WTC11 (cell line): ENCODE measurements at regions of chr6 and their contacts with region 1.

Region 1: DNA sequence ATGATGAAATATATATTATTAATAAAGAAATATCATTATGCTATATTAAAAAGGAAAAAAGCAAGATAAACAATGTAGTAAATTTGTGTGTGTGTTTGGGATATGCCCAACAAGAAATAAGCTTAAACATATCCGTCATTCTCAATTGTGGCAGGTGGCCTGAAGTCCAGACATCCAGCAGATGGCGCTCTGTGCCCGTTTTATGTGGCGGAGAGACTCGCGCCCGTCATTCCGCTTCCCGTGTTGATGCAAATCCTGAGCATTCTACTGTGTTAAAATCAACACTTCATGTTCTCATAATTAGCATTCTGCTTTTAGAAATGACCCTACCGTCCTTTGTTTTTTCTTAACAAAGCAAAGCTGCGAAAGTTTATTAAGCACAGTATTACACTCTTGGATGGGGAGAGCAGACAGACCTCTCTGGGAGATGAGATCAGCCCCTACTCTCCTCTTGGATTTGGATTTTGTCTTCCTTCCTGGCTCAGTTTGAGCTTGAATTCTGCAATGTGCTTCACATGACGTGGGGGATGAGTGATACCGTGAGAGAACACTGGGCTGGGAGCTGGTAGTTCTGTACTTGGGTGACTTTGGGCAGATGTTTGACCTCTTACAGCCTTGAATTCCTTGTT is 125.8 kb downstream of the MCHR2 start:
- DNase-seq: peak; percentile 87
- ATAC-seq: peak; percentile 84
- H3K4me3 Mint-ChIP-seq: peak overlapping the region; percentile 50
- H3K27ac Mint-ChIP-seq: no peak overlapping the region
- H3K4me1 Mint-ChIP-seq: peaks cover 7% of the 10 kb centered on the region; the same call in 1 of the 2 replicates
- H3K27me3 Mint-ChIP-seq: peaks cover 14% of the 10 kb centered on the region
- CTCF ChIP-seq: peak; percentile 79

Region 2: GRCh38 chr6:99645986-99646385 is 222.2 kb before region 1 on chr6:
- CTCF ChIA-PET with region 1: no interaction called
- POLR2A ChIA-PET with region 1: no interaction called
- DNase-seq: no peak
- ATAC-seq: no peak
- H3K4me3 Mint-ChIP-seq: no peak overlapping the region
- H3K27ac Mint-ChIP-seq: no peak overlapping the region
- H3K4me1 Mint-ChIP-seq: no peaks in the 10 kb centered on the region
- H3K27me3 Mint-ChIP-seq: peaks cover 8% of the 10 kb centered on the region
- CTCF ChIP-seq: no peak

Region 3: GRCh38 chr6:99846006-99846405 is 22.2 kb before region 1 on chr6:
- CTCF ChIA-PET with region 1: interaction called, 12 read pairs
- POLR2A ChIA-PET with region 1: no interaction called
- DNase-seq: no peak
- ATAC-seq: peak; percentile 81
- H3K4me3 Mint-ChIP-seq: no peak overlapping the region
- H3K27ac Mint-ChIP-seq: no peak overlapping the region
- H3K4me1 Mint-ChIP-seq: peaks cover 24% of the 10 kb centered on the region
- H3K27me3 Mint-ChIP-seq: peaks cover 78% of the 10 kb centered on the region
- CTCF ChIP-seq: no peak

Region 4: GRCh38 chr6:99882128-99882702 is 14.0 kb after region 1 on chr6:
- CTCF ChIA-PET with region 1: interaction called, 17 read pairs
- POLR2A ChIA-PET with region 1: no interaction called
- DNase-seq: no peak
- ATAC-seq: peak; percentile 62
- H3K4me3 Mint-ChIP-seq: no peak overlapping the region
- H3K27ac Mint-ChIP-seq: no peak overlapping the region
- H3K4me1 Mint-ChIP-seq: peaks cover 8% of the 10 kb centered on the region
- H3K27me3 Mint-ChIP-seq: no peaks in the 10 kb centered on the region
- CTCF ChIP-seq: no peak

Region 5: DNA sequence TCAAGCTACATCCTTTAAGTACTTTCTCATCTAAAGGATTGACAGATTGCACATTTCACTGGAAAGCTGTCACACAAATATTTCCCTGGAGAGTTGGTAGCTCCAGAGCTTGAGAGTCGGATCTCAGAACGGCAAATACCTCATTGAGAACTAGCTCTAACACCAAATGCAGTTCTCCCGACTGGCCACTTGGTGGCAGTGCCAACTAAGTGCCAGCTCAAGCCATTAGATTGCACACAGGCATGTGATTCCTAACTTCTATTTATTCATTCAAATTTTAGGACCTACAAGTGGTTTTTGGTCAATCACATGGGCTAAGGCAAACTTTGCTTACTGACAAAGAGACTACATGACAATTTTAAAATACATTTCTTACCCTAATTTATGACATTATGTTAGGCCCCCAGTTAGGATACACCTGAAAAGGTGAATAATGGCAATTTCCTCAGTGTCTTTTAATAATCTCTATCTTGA is 133.8 kb after region 1 on chr6:
- CTCF ChIA-PET with region 1: interaction called, 24 read pairs
- POLR2A ChIA-PET with region 1: no interaction called
- DNase-seq: peak; percentile 48
- ATAC-seq: peak; percentile 92
- H3K4me3 Mint-ChIP-seq: no peak overlapping the region
- H3K27ac Mint-ChIP-seq: no peak overlapping the region
- H3K4me1 Mint-ChIP-seq: no peaks in the 10 kb centered on the region
- H3K27me3 Mint-ChIP-seq: no peaks in the 10 kb centered on the region; the same call in 1 of the 2 replicates
- CTCF ChIP-seq: peak; percentile 83

Region 6: GRCh38 chr6:100105138-100105753 is 237.1 kb after region 1 on chr6:
- CTCF ChIA-PET with region 1: interaction called, 52 read pairs
- POLR2A ChIA-PET with region 1: no interaction called
- DNase-seq: no peak
- ATAC-seq: no peak
- H3K4me3 Mint-ChIP-seq: no peak overlapping the region
- H3K27ac Mint-ChIP-seq: no peak overlapping the region
- H3K4me1 Mint-ChIP-seq: peaks cover 17% of the 10 kb centered on the region
- H3K27me3 Mint-ChIP-seq: no peaks in the 10 kb centered on the region
- CTCF ChIP-seq: no peak